Natural killer cell (primary cell): ENCODE measurements at regions of chr14 and their contacts with region 1.

Region 1: DNA sequence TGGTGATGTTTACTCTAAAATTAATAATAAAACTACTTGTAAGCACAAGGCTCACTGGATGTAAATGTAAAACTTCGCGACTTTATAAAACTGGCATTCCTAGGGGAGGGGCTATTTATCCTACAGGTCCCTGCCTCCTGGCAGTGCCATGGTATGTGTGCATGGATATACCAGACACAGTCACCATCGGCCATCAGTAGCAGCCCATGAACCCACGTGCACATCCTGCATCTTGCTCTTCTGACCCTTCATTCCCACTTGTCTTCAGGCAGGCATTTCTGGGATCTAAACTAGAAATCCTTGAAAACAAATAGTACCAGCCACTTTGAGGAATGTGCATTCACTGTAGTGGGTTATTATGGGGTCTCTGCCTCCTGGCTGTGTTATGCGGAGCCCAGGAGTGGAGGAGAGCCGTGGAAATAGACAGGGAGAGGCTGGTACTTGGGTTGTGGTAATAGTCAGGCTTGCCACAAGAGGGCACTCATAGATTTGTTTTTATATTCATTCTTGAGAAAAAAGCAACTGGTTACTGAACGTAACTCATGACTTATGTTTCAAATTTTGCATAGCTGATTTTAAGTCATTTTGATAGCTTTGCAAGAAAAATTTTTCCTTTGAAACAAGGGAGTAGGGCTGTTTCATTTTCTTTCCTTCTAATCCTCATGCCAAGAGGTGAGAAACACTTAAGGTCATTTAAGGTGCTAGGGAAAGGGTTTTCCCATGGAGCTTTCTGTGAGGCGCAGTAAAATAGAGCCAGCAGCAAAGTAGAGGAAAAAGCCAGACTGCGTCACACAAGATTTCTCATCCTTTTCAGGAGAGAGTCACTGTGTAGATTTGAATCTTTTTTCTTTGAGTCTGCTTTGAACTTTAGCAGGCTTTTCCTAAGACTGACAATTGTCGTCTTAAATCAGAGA is 17.4 kb upstream of the GALNT16 start:
- DNase-seq: peak in 1 of 2 donors; percentile 75
- ATAC-seq: peak in 2 of 3 donors; percentile 46 to 69
- H3K4me3 ChIP-seq: no peak overlapping the region
- H3K4me3 Mint-ChIP-seq: no peak overlapping the region
- H3K27ac ChIP-seq: no peak overlapping the region
- H3K27ac Mint-ChIP-seq: no peak overlapping the region
- H3K4me1 ChIP-seq: no peaks in the 10 kb centered on the region
- H3K4me1 Mint-ChIP-seq: no peaks in the 10 kb centered on the region
- H3K27me3 ChIP-seq: no peaks in the 10 kb centered on the region
- H3K27me3 Mint-ChIP-seq: no peaks in the 10 kb centered on the region
- CTCF ChIP-seq: peak; percentile 81

Region 2: DNA sequence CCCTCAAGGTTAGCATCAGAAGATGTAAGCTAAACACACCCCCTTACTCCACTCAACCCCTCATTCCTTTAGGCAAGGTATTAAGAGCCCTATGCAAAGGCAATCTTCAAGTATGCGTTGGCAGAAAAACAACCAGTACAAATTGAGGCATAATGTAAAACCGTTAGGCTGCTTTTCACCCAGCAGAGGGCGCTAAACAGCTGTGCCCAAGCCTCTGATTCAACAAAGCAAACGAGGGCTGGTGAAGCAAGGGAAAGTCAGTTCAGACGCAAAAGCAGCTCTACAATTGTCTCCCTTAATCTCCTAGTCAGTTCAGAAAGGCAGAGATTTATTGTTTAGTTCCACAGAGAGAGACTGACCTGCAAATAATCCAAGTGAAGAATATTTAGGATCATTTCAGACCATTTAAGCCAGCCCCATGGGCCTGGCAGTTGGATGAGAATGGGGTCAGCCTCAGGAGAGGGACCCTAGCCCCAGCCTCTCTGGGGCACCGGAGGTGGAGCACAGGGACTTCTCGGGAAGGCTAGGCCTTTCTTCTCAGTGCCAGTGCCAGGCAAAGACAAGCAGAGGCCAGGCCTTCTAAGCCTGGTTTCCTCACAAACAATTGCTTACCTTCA is 113.2 kb before region 1 on chr14:
- intact Hi-C with region 1: loop called (anchors 1 kb)
- DNase-seq: peak; percentile 50 to 92
- ATAC-seq: peak; percentile 84 to 90 (median 87)
- H3K4me3 ChIP-seq: no peak overlapping the region
- H3K4me3 Mint-ChIP-seq: no peak overlapping the region
- H3K27ac ChIP-seq: peak overlapping the region; percentile 12
- H3K27ac Mint-ChIP-seq: peak overlapping the region; percentile 34 to 85
- H3K4me1 ChIP-seq: peaks cover 8% of the 10 kb centered on the region
- H3K4me1 Mint-ChIP-seq: peaks cover 88% of the 10 kb centered on the region in 2 donors
- H3K27me3 ChIP-seq: no peaks in the 10 kb centered on the region
- H3K27me3 Mint-ChIP-seq: no peaks in the 10 kb centered on the region
- CTCF ChIP-seq: peak; percentile 92

Region 3: GRCh38 chr14:69460093-69460701 is 217.6 kb after region 1 on chr14:
- intact Hi-C with region 1: loop called (anchors 1 kb)
- DNase-seq: peak in 1 of 2 donors; percentile 73
- ATAC-seq: peak; percentile 67 to 84 (median 82)
- H3K4me3 ChIP-seq: no peak overlapping the region
- H3K4me3 Mint-ChIP-seq: no peak overlapping the region
- H3K27ac ChIP-seq: no peak overlapping the region
- H3K27ac Mint-ChIP-seq: peak overlapping the region in 1 of 2 donors; percentile 38
- H3K4me1 ChIP-seq: no peaks in the 10 kb centered on the region
- H3K4me1 Mint-ChIP-seq: no peaks in the 10 kb centered on the region
- H3K27me3 ChIP-seq: no peaks in the 10 kb centered on the region
- H3K27me3 Mint-ChIP-seq: no peaks in the 10 kb centered on the region
- CTCF ChIP-seq: peak; percentile 62

Region 4: DNA sequence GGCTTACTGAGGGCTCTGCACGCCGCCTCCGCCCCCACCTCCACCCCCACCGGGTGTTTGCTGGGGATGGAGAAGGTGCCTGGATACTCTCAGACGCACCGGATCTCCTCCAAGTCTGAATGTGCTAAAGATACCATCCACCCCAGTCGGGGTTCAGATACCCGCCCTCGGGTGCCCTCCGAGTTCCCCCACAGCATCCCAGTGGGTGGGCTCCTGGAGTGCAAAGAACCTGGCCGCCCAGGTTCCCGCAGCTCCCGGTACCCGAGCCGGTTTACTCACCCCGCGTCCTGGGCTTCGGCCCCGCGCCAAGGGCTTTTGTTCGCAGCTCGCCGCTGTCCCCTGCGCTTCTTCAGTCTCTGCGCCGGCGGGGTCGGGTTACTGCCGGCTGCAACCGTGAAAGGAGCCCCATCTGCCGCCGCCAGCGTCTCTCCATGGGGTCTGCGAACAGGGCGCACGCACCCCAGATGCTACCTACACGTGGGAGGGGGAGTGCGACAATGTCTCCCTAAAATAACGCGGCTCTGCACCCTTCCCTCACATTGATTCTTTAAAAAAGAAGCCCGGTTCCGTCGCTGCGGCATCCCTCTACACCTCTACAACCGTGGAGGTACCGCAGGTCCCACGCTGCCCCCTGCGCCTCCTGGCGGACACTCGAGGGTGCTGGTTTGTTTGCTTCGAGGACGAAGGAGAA is 331.8 kb after region 1 on chr14 and contains the start of gene CCDC177:
- intact Hi-C with region 1: loop called (anchors 1 kb)
- DNase-seq: peak; percentile 63 to 84
- ATAC-seq: peak; percentile 81 to 95 (median 94)
- H3K4me3 ChIP-seq: peak within 1 kb of the TSS; percentile 30
- H3K4me3 Mint-ChIP-seq: peak within 1 kb of the TSS; percentile 89
- H3K27ac ChIP-seq: no peak within 1 kb of the TSS
- H3K27ac Mint-ChIP-seq: peak within 1 kb of the TSS in 1 of 2 donors; percentile 50
- H3K4me1 ChIP-seq: peaks cover 17% of the 10 kb centered on the region
- H3K4me1 Mint-ChIP-seq: peaks cover 6 to 12% of the 10 kb centered on the region in 2 donors
- H3K27me3 ChIP-seq: peaks cover 24% of the 10 kb centered on the region
- H3K27me3 Mint-ChIP-seq: peaks cover 41 to 42% of the 10 kb centered on the region in 2 donors
- CTCF ChIP-seq: peak; percentile 94
- total RNA-seq, gene CCDC177: not detected